HCT116 (cell line): ENCODE measurements at regions of chr12 and their contacts with region 1.

Region 1: GRCh38 chr12:114655934-114656749 is 27.8 kb downstream of the TBX3 start:
- DNase-seq: peak; percentile 35
- ATAC-seq: peak; percentile 87
- H3K4me3 ChIP-seq: 0 out of 4 replicates have a peak overlapping the region, but pooled peaks of 1 of the 2 experiments have one; percentile 6
- H3K27ac ChIP-seq: no peak overlapping the region
- H3K4me1 ChIP-seq: peaks cover 6 to 22% of the 10 kb centered on the region in 2 experiments; a peak in 3 of 4 replicates
- H3K27me3 ChIP-seq: no peaks in the 10 kb centered on the region
- CTCF ChIP-seq: no peak
- POLR2A ChIP-seq: no peak
- RAD21 ChIP-seq: no peak

Region 2: GRCh38 chr12:114598111-114598510 is 58.0 kb before region 1 on chr12:
- CTCF ChIA-PET with region 1: no interaction called
- POLR2A ChIA-PET with region 1: no interaction called
- RAD21 ChIA-PET with region 1: no interaction called
- intact Hi-C with region 1: no loop called
- DNase-seq: no peak
- ATAC-seq: no peak
- H3K4me3 ChIP-seq: no peak overlapping the region
- H3K27ac ChIP-seq: no peak overlapping the region
- H3K4me1 ChIP-seq: no peaks in the 10 kb centered on the region
- H3K27me3 ChIP-seq: no peaks in the 10 kb centered on the region
- CTCF ChIP-seq: no peak
- POLR2A ChIP-seq: no peak
- RAD21 ChIP-seq: no peak

Region 3: DNA sequence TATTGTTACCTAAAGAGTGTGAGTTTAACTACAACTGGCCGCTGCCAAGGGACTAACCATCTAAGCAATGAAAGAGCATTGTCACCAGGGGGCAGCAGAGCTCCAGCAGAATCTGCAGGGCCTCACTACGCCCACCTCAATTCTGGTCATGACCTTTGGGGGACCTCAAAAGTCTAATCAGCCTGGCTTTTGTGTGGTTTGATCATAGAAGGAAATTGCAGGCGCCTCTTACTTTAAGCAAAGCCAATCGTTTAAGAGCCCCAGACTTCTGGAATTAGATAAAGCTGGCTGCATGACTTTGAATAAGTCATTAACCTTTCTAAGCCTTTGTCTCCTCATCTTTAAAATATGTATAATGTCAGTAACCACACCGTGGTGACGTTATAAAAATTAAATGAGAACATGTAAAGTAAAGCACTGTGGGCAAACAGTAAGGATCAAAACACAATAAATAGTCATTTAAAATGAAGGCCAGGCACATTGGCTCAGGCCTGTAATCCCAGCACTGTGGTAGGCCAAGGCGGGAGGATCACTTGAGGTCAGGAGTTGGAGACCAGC is 30.8 kb before region 1 on chr12:
- CTCF ChIA-PET with region 1: interaction called, 12 read pairs
- POLR2A ChIA-PET with region 1: no interaction called
- RAD21 ChIA-PET with region 1: no interaction called
- intact Hi-C with region 1: no loop called
- DNase-seq: peak; percentile 52
- ATAC-seq: peak; percentile 89
- H3K4me3 ChIP-seq: no peak overlapping the region
- H3K27ac ChIP-seq: no peak overlapping the region
- H3K4me1 ChIP-seq: peaks cover 12 to 18% of the 10 kb centered on the region in 2 experiments; a peak in 3 of 4 replicates
- H3K27me3 ChIP-seq: no peaks in the 10 kb centered on the region
- CTCF ChIP-seq: peak; percentile 73 to 89 (median 87)
- POLR2A ChIP-seq: no peak
- RAD21 ChIP-seq: peak; percentile 85